Activated naive CD4-positive, alpha-beta T cell treated with anti-CD3 and anti-CD28 coated beads for 36 hours (primary cell): ENCODE measurements at regions of chr9 and their contacts with region 1.

Region 1: DNA sequence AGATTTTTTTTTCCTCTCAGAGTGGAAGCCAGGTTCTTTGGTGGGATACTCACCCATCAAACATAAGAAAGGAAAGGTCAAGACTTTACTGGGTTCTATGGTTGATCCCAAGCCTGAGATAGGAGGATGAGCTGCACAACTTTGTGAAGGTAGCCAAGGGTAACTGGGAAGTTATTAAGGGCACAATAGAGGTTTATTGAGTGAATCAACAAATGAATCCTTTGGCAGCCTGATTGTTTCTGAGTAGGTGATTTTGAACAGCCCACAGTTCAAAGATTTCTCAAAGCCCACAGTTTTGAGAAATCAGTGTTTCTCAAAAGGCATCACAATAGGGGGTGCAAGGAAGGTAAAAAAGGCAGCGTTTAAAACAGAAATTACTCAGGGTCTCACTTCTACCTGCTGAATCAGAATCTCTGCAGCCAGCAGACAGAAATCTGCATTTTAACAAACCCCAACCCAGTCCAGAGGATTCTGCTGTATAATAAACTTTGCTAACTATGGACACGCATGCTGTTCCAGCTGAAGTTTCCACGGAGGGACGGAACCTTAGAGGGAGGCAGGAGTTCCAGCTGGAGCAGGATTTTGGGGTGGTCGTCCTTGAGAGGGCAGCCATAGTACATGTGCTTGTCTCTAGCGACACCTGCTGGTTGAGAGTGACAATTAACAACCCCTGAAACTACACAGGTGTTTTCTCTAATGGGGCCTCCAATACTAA is 32.7 kb upstream of the FSD1L start:
- DNase-seq: peak; percentile 72
- H3K4me3 Mint-ChIP-seq: no peak overlapping the region
- H3K27ac Mint-ChIP-seq: no peak overlapping the region
- H3K4me1 Mint-ChIP-seq: peaks cover 2% of the 10 kb centered on the region
- H3K27me3 Mint-ChIP-seq: peaks cover 27% of the 10 kb centered on the region

Region 2: DNA sequence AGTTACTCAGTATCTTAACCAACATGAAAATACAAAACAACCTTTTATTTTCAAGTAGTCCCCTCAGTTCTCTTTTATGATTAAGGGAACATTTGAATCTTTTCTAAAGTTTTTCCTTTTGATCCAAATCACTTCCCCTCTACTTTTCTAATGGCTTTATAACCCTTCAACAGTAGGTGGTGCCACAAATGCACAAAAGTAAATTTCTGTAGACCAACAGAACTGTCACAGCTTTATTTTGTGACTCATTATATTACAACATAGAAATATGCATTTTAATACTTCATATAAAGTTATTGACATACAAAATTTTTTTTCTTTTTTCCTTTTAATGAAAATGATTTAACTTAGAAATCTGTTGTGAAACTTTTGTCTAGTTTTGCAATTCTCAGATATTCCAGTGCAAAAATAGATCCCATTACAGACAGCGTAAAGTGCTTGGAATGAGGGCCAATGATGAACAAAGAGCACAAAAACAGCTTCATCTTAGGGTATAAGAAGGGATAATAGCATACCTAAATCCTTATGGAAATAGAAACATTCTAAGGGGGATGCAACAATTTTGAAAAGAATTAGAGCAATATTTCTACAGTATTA is 634.2 kb before region 1 on chr9:
- CTCF ChIA-PET with region 1: no interaction called
- intact Hi-C with region 1: loop called (anchors 2 kb)
- DNase-seq: no peak
- H3K4me3 Mint-ChIP-seq: no peak overlapping the region
- H3K27ac Mint-ChIP-seq: no peak overlapping the region
- H3K4me1 Mint-ChIP-seq: no peaks in the 10 kb centered on the region
- H3K27me3 Mint-ChIP-seq: no peaks in the 10 kb centered on the region

Region 3: GRCh38 chr9:104836235-104836634 is 578.9 kb before region 1 on chr9:
- CTCF ChIA-PET with region 1: no interaction called
- intact Hi-C with region 1: no loop called
- DNase-seq: no peak
- H3K4me3 Mint-ChIP-seq: no peak overlapping the region
- H3K27ac Mint-ChIP-seq: no peak overlapping the region
- H3K4me1 Mint-ChIP-seq: peaks cover 18% of the 10 kb centered on the region
- H3K27me3 Mint-ChIP-seq: no peaks in the 10 kb centered on the region

Region 4: GRCh38 chr9:104863180-104863883 is 551.8 kb before region 1 on chr9:
- CTCF ChIA-PET with region 1: interaction called, 8 read pairs
- intact Hi-C with region 1: loop called (anchors 1 kb)
- DNase-seq: peak; percentile 58
- H3K4me3 Mint-ChIP-seq: no peak overlapping the region
- H3K27ac Mint-ChIP-seq: no peak overlapping the region
- H3K4me1 Mint-ChIP-seq: peaks cover 17% of the 10 kb centered on the region
- H3K27me3 Mint-ChIP-seq: no peaks in the 10 kb centered on the region

Region 5: GRCh38 chr9:105157130-105157583 is 257.9 kb before region 1 on chr9:
- CTCF ChIA-PET with region 1: interaction called, 14 read pairs
- intact Hi-C with region 1: loop called (anchors 1 kb)
- DNase-seq: peak; percentile 46
- H3K4me3 Mint-ChIP-seq: no peak overlapping the region
- H3K27ac Mint-ChIP-seq: no peak overlapping the region
- H3K4me1 Mint-ChIP-seq: peaks cover 16% of the 10 kb centered on the region
- H3K27me3 Mint-ChIP-seq: no peaks in the 10 kb centered on the region

Region 6: DNA sequence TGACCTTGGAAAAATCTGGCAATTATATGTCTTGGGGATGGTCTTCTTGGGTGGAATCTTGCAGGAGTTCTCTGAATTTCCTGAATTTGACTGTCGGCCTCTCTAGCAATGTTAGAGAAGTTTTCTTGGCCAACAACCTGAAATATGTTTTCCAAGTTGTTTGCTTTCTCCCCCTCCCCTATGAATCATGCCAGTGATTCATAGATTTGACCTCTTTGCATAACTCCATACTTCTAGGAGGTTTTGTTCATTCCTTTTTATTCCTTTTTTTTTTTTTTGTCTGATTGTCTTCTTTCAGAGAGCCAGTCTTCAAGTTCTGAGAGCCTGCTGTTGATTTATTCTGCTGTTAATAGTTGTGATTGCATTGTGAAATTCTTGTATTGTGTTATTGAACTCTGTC is 227.3 kb before region 1 on chr9:
- CTCF ChIA-PET with region 1: no interaction called
- intact Hi-C with region 1: loop called (anchors 1 kb)
- DNase-seq: no peak
- H3K4me3 Mint-ChIP-seq: no peak overlapping the region
- H3K27ac Mint-ChIP-seq: no peak overlapping the region
- H3K4me1 Mint-ChIP-seq: no peaks in the 10 kb centered on the region
- H3K27me3 Mint-ChIP-seq: no peaks in the 10 kb centered on the region

Region 7: DNA sequence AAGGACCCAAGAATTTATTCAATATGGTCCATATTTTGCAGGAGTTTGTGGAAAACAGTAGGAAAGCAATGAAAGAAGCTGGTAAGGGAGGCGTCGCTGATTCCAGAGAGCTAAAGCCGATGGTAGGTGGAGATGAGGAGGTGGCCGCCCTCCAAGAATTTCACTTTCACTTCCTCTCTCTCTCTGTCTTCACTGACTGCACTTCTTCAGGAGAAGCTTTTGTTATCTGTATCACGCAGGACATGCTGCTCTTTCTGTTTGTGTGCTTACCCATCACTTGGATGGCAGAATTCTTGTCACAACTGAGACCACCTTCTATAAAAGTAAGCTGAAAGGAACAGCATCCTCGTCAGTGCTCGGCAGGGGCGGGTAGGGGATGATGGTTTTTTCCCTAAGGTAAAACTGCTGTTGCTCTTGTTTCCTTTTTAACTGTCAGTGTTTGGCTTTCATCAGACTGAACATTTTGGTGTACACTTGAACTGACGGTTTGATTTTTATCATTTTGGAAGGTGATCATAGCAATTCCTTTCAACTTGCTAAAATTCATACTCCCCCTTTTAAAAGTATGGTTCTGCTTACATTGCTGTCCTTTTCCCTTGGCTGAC is 29.6 kb before region 1 on chr9:
- CTCF ChIA-PET with region 1: interaction called, 3 read pairs
- intact Hi-C with region 1: loop called (anchors 2 kb)
- DNase-seq: peak; percentile 50
- H3K4me3 Mint-ChIP-seq: peak overlapping the region; percentile 78
- H3K27ac Mint-ChIP-seq: no peak overlapping the region
- H3K4me1 Mint-ChIP-seq: peaks cover 12% of the 10 kb centered on the region
- H3K27me3 Mint-ChIP-seq: no peaks in the 10 kb centered on the region